ENCODE measurements at regions of chr2 and their contacts with region 1.

Region 1: GRCh38 chr2:14903709-14904374 is 271.3 kb downstream of the LRATD1 start:
- H3K4me3 Mint-ChIP-seq: no peak overlapping the region
- H3K27ac Mint-ChIP-seq: no peak overlapping the region
- H3K4me1 Mint-ChIP-seq: no peaks in the 10 kb centered on the region
- H3K27me3 Mint-ChIP-seq: no peaks in the 10 kb centered on the region

Region 2: GRCh38 chr2:15577071-15577735 is 673.4 kb after region 1 on chr2:
- intact Hi-C with region 1: loop called (anchors 5 kb)
- H3K4me3 Mint-ChIP-seq: no peak overlapping the region
- H3K27ac Mint-ChIP-seq: no peak overlapping the region
- H3K4me1 Mint-ChIP-seq: no peaks in the 10 kb centered on the region
- H3K27me3 Mint-ChIP-seq: no peaks in the 10 kb centered on the region